MCF 10A (cell line): ENCODE measurements at regions of chr1 and their contacts with region 1.

Region 1: GRCh38 chr1:209805875-209806760 is at the start of gene IRF6:
- DNase-seq: peak; percentile 99
- H3K4me3 Mint-ChIP-seq: peak within 1 kb of the TSS; percentile 90
- H3K27ac Mint-ChIP-seq: peak within 1 kb of the TSS; percentile 92
- H3K4me1 Mint-ChIP-seq: peaks cover 74% of the 10 kb centered on the region
- H3K27me3 Mint-ChIP-seq: no peaks in the 10 kb centered on the region
- CTCF ChIP-seq: no peak
- total RNA-seq, gene IRF6: 87.8 and 106 TPM in 2 replicates

Region 2: DNA sequence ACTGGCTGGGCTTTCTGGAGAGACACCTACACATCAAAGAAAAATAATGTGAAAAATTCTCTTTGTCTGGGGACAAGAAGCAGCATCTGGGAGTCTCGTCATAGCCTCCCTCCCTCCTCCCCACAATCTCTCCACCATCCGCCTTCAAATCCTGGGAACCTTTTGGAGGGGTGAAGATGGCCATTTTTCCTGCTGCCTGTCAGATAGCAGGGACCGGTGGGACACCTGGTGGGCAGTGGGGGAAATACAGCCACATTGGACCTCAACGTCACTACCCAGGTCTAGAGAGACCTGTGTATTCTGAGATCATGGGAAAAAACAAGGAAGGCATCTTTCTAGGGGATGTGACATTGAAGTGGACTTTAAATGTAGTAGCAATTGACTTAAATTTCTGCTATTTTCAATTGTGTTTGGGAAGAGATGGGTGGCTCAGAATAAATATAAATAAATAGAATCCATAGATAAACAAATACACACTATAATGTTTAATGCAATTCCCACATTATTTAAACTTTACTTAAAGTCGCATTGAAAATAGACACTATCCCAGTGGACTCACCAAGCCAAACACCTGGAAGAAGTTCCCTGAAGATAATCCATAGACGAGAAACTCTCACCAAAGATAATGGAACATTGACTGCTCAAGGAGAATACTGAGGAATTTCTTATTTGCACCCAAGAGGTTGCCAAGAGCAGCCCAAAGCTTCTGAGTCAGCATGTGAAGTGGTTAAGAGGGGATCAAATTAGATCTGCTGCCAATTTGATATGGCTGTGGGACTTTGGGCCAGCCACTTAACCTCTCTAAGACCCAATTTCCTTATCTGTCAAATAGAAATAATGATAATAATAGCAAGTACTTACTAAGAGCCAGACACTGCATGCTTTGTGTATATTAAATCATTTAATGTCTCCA is 370.2 kb before region 1 on chr1:
- CTCF ChIA-PET with region 1: no interaction called
- POLR2A ChIA-PET with region 1: no interaction called
- intact Hi-C with region 1: no loop called
- DNase-seq: peak; percentile 97
- H3K4me3 Mint-ChIP-seq: no peak overlapping the region
- H3K27ac Mint-ChIP-seq: peak overlapping the region; percentile 90
- H3K4me1 Mint-ChIP-seq: peaks cover 51% of the 10 kb centered on the region
- H3K27me3 Mint-ChIP-seq: no peaks in the 10 kb centered on the region
- CTCF ChIP-seq: peak; percentile 100

Region 3: GRCh38 chr1:209790286-209791193 is 15.6 kb before region 1 on chr1:
- CTCF ChIA-PET with region 1: interaction called, 18 read pairs
- POLR2A ChIA-PET with region 1: interaction called, 142 read pairs
- intact Hi-C with region 1: no loop called
- DNase-seq: peak; percentile 32
- H3K4me3 Mint-ChIP-seq: no peak overlapping the region
- H3K27ac Mint-ChIP-seq: no peak overlapping the region
- H3K4me1 Mint-ChIP-seq: peaks cover 6% of the 10 kb centered on the region
- H3K27me3 Mint-ChIP-seq: no peaks in the 10 kb centered on the region
- CTCF ChIP-seq: no peak

Region 4: DNA sequence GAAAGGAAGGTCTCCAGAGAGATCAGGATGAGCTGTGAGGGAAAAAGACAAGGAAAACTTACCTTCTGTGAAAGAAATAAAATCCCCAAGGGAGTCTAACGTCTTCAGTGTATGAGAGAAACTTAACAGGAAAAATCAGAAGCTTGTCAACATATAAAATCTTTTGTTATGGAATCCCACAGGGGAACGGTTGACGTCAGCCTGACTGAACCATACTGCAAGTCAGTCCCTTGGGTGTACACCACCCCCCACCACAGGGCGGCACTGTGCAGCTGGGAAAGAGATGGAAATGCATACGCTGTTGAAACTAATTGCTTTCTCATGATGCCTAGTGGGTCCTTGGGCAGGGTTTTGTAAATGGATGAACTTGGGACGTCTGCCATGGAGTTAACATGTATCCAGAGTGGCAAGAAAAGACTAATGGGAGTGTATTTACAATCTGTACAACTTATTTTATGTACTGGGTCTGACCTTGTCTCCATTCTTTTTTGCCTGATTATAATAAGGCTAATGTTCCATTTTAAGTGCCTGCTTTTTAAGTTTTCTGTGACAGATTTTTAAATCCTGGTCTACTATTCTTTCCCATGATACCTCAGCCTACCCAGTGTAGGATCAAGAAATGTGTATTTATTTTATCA is 44.3 kb after region 1 on chr1:
- CTCF ChIA-PET with region 1: interaction called, 10 read pairs
- POLR2A ChIA-PET with region 1: interaction called, 205 read pairs
- intact Hi-C with region 1: no loop called
- DNase-seq: peak; percentile 80
- H3K4me3 Mint-ChIP-seq: no peak overlapping the region
- H3K27ac Mint-ChIP-seq: peak overlapping the region; percentile 47
- H3K4me1 Mint-ChIP-seq: peaks cover 26% of the 10 kb centered on the region
- H3K27me3 Mint-ChIP-seq: no peaks in the 10 kb centered on the region
- CTCF ChIP-seq: peak; percentile 92